Psoas muscle (tissue), 8 donors: ENCODE measurements at regions of chr6 and their contacts with region 1.

Region 1: GRCh38 chr6:45986746-45987274 is 28.9 kb downstream of the CLIC5 start:
- DNase-seq: peak; percentile 16 to 63
- ATAC-seq: peak; percentile 92 to 96 (median 95)
- H3K4me3 ChIP-seq: no peak overlapping the region
- H3K27ac ChIP-seq: peak overlapping the region; percentile 87
- H3K4me1 ChIP-seq: peaks cover 94% of the 10 kb centered on the region
- H3K27me3 ChIP-seq: no peaks in the 10 kb centered on the region
- CTCF ChIP-seq: no peak

Region 2: DNA sequence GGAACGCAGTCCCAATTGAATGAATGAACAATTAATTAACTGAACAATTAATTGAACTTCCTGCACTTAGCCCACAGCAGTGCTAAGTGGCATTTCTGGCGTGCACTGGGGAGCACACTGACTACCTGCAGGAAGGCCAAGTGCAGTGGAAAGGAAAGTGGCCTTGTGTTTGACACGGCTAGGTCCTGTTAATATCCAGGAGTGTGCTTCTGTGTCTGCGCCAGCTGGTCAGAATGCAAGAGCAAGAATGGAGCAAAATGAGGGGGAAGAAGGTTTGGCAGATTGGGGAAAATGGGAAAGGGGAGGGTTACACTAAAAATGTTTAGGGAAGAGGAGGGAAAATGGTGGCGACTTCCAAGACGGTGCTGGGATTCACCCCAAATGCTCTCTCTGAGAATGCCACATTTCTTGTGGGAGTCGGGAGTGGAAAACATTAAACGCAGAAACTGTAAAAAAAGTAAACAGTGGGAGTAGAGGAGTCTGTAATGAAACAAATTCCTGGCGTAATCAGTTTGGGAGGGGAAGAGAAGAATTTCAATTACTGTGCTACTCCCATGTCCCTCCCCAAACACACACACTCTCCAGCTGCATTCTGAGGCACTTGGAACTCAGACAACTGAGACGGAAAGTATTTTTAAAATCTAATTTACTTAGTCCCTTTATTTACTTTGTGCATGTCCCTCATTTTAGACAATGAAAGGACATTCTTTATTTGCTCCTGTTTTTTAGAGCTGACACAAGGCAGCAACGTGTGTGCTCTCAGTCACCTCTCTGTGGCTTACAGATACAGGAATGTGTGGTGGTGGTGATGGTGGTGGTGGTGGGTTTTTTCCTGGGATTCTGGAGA is 35.3 kb before region 1 on chr6:
- intact Hi-C with region 1: loop called in 1 of 2 experiments (anchors 5 kb)
- DNase-seq: no peak
- ATAC-seq: no peak
- H3K4me3 ChIP-seq: no peak overlapping the region
- H3K27ac ChIP-seq: peak overlapping the region; percentile 46
- H3K4me1 ChIP-seq: peaks cover 75% of the 10 kb centered on the region
- H3K27me3 ChIP-seq: no peaks in the 10 kb centered on the region
- CTCF ChIP-seq: no peak